GM12878 (cell line): ENCODE measurements at regions of chr7 and their contacts with region 1.

Region 1: DNA sequence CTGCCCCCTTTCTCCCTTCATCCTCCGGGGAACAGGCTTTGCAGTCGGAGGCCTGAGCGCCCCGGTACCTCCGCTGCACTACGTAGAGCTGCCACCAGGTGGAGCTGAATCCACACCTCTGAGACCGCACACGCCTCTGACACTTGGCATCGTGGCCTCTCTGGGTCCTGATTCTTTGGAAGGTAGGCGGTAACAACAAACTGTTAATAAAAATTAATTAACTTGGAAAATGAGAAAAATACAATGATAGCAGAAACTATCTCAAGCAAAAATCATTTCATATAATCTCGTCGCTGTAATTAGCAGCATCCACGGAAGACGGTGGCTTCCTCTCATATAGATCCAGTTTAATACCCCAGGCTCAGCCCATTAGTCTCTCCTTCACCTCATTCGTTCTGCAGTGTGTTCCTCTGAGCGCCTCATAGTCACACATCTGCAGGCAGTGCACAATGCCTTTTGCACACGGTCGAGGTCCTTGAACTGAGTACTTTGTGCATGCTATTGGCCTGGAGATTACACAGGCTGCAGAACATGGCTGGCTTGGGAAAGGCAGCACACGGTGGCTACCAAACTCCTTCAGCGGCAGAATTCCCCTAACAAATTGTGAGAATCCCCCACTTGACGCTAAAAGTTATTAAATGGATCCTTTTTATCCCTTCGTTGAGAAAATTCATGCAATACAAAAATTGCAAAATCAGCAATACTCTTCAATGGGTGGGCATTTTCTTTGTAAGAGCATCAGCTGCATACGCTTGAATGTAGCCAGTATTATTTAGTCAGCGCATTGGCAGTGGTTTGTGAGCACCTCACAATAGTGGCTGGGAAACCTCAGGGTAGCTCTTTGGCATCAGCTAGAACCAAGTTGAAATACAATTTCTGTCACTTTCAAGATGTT is 18.7 kb downstream of the OR9A2 start:
- DNase-seq: peak; percentile 9
- ATAC-seq: peak; percentile 95
- H3K4me3 ChIP-seq: no peak overlapping the region
- H3K27ac ChIP-seq: no peak overlapping the region
- H3K4me1 ChIP-seq: no peaks in the 10 kb centered on the region
- H3K27me3 ChIP-seq: no peaks in the 10 kb centered on the region; a peak in 1 of 4 replicates
- CTCF ChIP-seq: peak; percentile 92 to 97 (median 94)
- EP300 ChIP-seq: no peak
- POLR2A ChIP-seq: no peak
- RAD21 ChIP-seq: peak; percentile 97

Region 2: DNA sequence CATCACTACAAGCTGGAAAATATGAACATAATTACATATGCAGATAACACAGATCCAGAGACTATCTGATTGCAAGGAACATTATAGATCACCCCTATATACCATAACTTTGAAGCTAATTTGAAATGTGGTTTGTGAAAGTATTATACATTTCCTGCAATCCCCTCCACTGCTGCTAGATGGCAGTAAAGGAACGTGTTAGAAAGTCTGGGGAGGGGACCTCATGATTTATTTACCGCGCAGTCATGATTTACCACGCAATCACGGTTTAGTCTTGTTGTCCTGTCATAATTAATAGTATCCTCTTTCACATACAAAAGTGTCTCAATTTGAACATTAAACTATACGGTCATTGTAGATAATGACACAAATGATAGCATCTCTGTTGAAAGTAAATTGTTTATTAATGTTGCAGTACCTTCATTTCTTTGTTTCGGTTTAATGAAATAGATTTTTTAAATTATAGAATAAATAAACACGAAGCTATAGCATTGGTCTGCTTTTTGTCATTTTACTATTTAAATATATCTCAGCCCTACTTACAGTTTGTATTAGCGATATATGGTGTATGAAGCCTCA is 404.3 kb before region 1 on chr7:
- CTCF ChIA-PET with region 1: interaction called, 21 read pairs
- POLR2A ChIA-PET with region 1: no interaction called
- RAD21 ChIA-PET with region 1: interaction called, 12 read pairs
- SMC1A ChIA-PET with region 1: interaction called, 9 read pairs
- in situ Hi-C with region 1: no loop called
- intact Hi-C with region 1: loop called (anchors 10 kb)
- DNase-seq: no peak
- ATAC-seq: peak; percentile 74
- H3K4me3 ChIP-seq: no peak overlapping the region
- H3K27ac ChIP-seq: no peak overlapping the region
- H3K4me1 ChIP-seq: no peaks in the 10 kb centered on the region
- H3K27me3 ChIP-seq: no peaks in the 10 kb centered on the region
- CTCF ChIP-seq: peak; percentile 74 to 81 (median 81)
- EP300 ChIP-seq: no peak
- POLR2A ChIP-seq: no peak
- RAD21 ChIP-seq: peak; percentile 82

Region 3: DNA sequence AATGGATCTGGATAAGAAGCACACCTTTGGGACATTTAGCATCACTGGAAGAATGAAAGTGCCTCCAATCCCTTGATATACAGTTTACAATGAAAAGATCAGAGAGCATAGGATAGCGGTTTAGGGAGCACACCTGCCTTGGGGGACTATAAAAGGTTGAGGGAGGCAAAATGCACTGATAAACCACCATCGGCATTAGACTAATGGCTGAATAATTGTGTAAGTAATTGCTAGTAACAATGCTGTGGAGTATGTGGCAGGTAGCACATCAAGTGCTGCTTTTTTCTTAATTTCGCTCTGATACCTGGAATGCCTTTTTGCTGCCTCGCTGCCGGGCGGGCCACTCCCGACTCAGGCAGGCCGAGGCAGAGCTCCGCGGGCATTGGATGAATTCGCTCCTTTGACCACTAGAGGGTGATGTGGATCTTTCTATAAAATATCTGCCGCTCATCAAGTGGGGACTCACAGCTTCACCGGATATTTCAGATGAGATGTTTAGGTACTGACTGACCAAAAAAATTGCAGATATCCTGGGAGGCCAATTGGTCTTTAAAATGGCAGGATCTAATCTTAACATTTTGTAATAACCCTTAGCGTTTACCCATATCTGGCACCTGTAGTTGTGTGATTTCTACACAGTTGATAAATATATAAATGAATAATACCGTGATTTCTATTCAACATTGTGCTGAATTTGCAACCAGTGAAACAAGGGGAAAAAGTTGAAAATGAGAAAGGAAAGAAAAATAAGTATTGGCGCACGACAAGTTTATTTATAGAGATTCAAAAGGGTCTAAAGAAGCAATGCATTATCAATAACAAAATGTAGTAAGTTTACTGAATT is 375.7 kb before region 1 on chr7:
- CTCF ChIA-PET with region 1: interaction called, 56 read pairs
- POLR2A ChIA-PET with region 1: no interaction called
- RAD21 ChIA-PET with region 1: interaction called, 9 read pairs
- SMC1A ChIA-PET with region 1: interaction called, 23 read pairs
- in situ Hi-C with region 1: loop called (anchors 5 kb)
- intact Hi-C with region 1: loop called (anchors 2 kb)
- DNase-seq: peak; percentile 32
- ATAC-seq: peak; percentile 100
- H3K4me3 ChIP-seq: no peak overlapping the region
- H3K27ac ChIP-seq: no peak overlapping the region
- H3K4me1 ChIP-seq: no peaks in the 10 kb centered on the region
- H3K27me3 ChIP-seq: peaks cover 0 to 1% of the 10 kb centered on the region in 2 experiments; a peak in 1 of 4 replicates
- CTCF ChIP-seq: peak; percentile 73 to 86 (median 82)
- EP300 ChIP-seq: no peak
- POLR2A ChIP-seq: no peak
- RAD21 ChIP-seq: peak; percentile 81

Region 4: DNA sequence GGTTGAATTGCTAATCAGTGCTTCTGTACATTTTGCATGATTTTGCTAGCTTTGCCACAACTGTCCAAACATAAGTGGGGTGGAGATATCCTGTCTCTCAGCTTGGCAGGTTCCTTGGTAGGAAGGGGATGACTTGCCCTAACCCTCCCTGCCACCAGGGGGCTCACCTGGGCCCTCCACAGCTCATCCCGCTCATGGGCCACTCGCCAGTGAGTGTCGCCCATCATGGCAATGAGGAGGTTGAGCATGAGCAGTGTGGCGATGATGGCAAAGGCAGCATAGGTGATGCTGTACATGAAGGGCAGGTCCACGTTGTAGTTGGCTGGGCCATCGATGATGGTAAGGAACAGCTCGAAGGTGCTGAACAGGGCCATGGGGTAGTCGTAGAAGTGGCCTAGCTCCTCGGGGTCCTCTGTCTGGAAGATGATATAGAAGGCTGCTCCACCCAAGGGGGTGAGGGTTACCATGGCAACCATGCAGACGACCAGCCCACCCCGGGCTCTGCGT is 134.9 kb before region 1 on chr7:
- CTCF ChIA-PET with region 1: interaction called, 123 read pairs
- POLR2A ChIA-PET with region 1: no interaction called
- RAD21 ChIA-PET with region 1: interaction called, 5 read pairs
- SMC1A ChIA-PET with region 1: interaction called, 13 read pairs
- in situ Hi-C with region 1: loop called (anchors 5 kb)
- intact Hi-C with region 1: no loop called
- DNase-seq: no peak
- ATAC-seq: peak; percentile 93
- H3K4me3 ChIP-seq: no peak overlapping the region
- H3K27ac ChIP-seq: no peak overlapping the region
- H3K4me1 ChIP-seq: no peaks in the 10 kb centered on the region
- H3K27me3 ChIP-seq: no peaks in the 10 kb centered on the region
- CTCF ChIP-seq: peak; percentile 52 to 81 (median 76)
- EP300 ChIP-seq: no peak
- POLR2A ChIP-seq: no peak
- RAD21 ChIP-seq: peak; percentile 28; the same call in 1 of the 2 replicates

Region 5: DNA sequence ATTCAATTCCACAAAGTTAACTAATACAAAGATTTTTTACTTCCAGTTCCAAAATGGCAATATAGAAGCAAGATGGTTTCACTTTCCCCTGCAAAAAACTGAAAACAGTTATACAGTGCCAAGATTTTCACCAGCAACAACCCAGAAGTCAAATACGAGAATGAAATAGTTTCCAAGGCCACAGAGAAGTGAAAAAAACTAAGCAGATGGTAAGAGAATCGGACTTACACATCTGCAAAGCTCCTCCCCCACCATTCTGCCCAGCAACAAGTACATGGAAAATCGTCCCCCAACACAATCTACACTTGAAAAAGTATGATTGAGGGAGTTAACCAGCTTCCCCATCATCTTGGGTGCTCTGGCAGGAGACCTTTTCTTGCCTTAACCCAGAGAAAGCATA is 15.8 kb before region 1 on chr7:
- CTCF ChIA-PET with region 1: interaction called, 19 read pairs
- POLR2A ChIA-PET with region 1: no interaction called
- RAD21 ChIA-PET with region 1: interaction called, 3 read pairs
- SMC1A ChIA-PET with region 1: interaction called, 17 read pairs
- in situ Hi-C with region 1: no loop called
- intact Hi-C with region 1: no loop called
- DNase-seq: no peak
- ATAC-seq: no peak; the same call in 2 of the 3 replicates
- H3K4me3 ChIP-seq: no peak overlapping the region
- H3K27ac ChIP-seq: no peak overlapping the region
- H3K4me1 ChIP-seq: no peaks in the 10 kb centered on the region
- H3K27me3 ChIP-seq: no peaks in the 10 kb centered on the region
- CTCF ChIP-seq: no peak
- EP300 ChIP-seq: no peak
- POLR2A ChIP-seq: no peak
- RAD21 ChIP-seq: no peak

Region 6: GRCh38 chr7:143214789-143215679 is 206.8 kb after region 1 on chr7:
- CTCF ChIA-PET with region 1: interaction called, 434 read pairs
- POLR2A ChIA-PET with region 1: no interaction called
- RAD21 ChIA-PET with region 1: interaction called, 83 read pairs
- SMC1A ChIA-PET with region 1: interaction called, 191 read pairs
- in situ Hi-C with region 1: loop called (anchors 5 kb)
- intact Hi-C with region 1: loop called (anchors 1 kb)
- DNase-seq: peak; percentile 50
- ATAC-seq: peak; percentile 91
- H3K4me3 ChIP-seq: no peak overlapping the region
- H3K27ac ChIP-seq: no peak overlapping the region
- H3K4me1 ChIP-seq: no peaks in the 10 kb centered on the region
- H3K27me3 ChIP-seq: no peaks in the 10 kb centered on the region; a peak in 2 of 4 replicates
- CTCF ChIP-seq: peak; percentile 97 to 100 (median 100); a peak in 5 of 6 replicates
- EP300 ChIP-seq: no peak
- POLR2A ChIP-seq: no peak
- RAD21 ChIP-seq: peak; percentile 100

Region 7: DNA sequence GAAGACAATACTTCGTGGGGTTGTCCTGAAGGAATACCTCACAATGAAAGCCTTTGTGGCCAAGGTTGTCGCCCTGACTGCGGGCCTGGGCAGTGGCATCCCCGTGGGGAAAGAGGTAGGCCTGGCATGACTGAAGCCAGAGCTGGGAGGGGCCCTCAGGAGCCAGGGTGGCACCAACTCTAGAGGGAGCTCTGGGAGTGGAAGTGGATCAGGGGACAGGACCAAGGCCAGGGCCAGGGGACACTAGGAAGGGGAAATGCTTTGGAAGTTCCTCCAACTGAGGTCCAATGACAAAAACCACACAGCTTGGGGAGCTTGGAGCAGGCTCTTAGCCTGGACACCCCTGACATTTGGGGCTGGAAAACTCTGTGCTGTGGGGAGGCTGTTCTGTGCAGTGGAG is 313.5 kb after region 1 on chr7:
- CTCF ChIA-PET with region 1: no interaction called
- POLR2A ChIA-PET with region 1: no interaction called
- RAD21 ChIA-PET with region 1: no interaction called
- SMC1A ChIA-PET with region 1: no interaction called
- in situ Hi-C with region 1: no loop called
- intact Hi-C with region 1: no loop called
- DNase-seq: no peak
- ATAC-seq: peak; percentile 47; the same call in 2 of the 3 replicates
- H3K4me3 ChIP-seq: no peak overlapping the region
- H3K27ac ChIP-seq: no peak overlapping the region
- H3K4me1 ChIP-seq: peaks cover 10% of the 10 kb centered on the region; the same call in 1 of the 2 replicates
- H3K27me3 ChIP-seq: no peaks in the 10 kb centered on the region
- CTCF ChIP-seq: peak in 2 of 3 experiments; percentile 12; a peak in 1 of 6 replicates
- EP300 ChIP-seq: no peak
- POLR2A ChIP-seq: no peak
- RAD21 ChIP-seq: no peak

Region 8: GRCh38 chr7:143416565-143417149 is 408.4 kb after region 1 on chr7:
- CTCF ChIA-PET with region 1: interaction called, 3 read pairs
- POLR2A ChIA-PET with region 1: no interaction called
- RAD21 ChIA-PET with region 1: no interaction called
- SMC1A ChIA-PET with region 1: no interaction called
- in situ Hi-C with region 1: loop called (anchors 10 kb)
- intact Hi-C with region 1: loop called (anchors 10 kb)
- DNase-seq: no peak
- ATAC-seq: peak; percentile 82
- H3K4me3 ChIP-seq: no peak overlapping the region
- H3K27ac ChIP-seq: no peak overlapping the region
- H3K4me1 ChIP-seq: no peaks in the 10 kb centered on the region
- H3K27me3 ChIP-seq: no peaks in the 10 kb centered on the region
- CTCF ChIP-seq: peak; percentile 61 to 77 (median 62)
- EP300 ChIP-seq: no peak
- POLR2A ChIP-seq: no peak
- RAD21 ChIP-seq: peak; percentile 81